ENCODE measurements at regions of chr6 and their contacts with region 1.

Region 1: DNA sequence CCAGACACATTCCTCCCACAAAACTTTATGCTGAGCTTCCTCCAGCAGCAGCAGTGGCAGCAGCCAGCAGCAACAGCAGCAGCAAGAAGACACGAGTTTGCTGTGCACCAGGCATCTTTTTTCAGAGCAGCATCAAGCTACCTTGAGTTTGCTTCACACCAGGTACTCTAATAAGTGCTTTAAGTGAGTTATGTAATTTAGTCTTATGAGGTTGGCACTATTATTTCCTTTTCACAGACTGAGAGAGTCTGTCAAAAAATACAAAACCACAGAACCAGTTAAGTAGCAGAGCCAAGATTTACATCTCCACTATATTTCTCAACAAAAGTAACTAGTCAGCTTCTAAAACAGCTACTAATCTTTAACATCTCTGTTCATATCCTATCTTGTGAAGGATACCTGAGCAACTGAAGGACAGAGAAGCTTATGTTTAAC is 23.7 kb downstream of the RANBP9 start:
- DNase-seq: peak in 7 of 9 donors; percentile 37 to 76 (median 64)
- ATAC-seq: peak; percentile 87
- H3K4me3 ChIP-seq: peak overlapping the region; percentile 13
- H3K4me3 Mint-ChIP-seq: peak overlapping the region; percentile 33 to 83 (median 70)
- H3K27ac ChIP-seq: peak overlapping the region; percentile 66
- H3K27ac Mint-ChIP-seq: peak overlapping the region; percentile 53 to 97 (median 94)
- H3K4me1 ChIP-seq: peaks cover 43 to 54% of the 10 kb centered on the region in 2 donors
- H3K4me1 Mint-ChIP-seq: peaks cover 40 to 73% (median 65%) of the 10 kb centered on the region in 7 donors
- H3K27me3 ChIP-seq: no peaks in the 10 kb centered on the region
- H3K27me3 Mint-ChIP-seq: no peaks in the 10 kb centered on the region

Region 2: DNA sequence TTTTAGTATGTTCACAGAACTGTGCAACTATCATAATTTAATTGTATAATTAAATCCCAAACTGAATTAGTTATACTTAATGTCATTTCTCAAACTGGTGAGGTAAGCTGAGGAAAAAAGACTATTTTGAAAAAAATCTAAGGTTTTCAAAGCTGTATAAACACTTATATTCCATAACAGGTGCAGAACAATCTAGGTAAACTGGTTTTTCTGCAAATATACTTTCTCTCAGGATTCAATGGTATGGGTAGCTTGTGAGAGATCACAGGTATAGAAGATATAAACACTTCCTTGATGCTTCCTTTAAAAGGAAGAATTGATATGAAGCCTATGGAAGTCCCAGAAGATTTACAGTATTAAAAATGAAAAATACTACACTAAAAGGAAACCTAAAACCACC is 39.1 kb before region 1 on chr6:
- CTCF ChIA-PET with region 1: no interaction called
- POLR2A ChIA-PET with region 1: no interaction called
- intact Hi-C with region 1: loop called in 1 of 2 experiments (anchors 5 kb)
- DNase-seq: no peak
- ATAC-seq: no peak
- H3K4me3 ChIP-seq: no peak overlapping the region
- H3K4me3 Mint-ChIP-seq: no peak overlapping the region
- H3K27ac ChIP-seq: no peak overlapping the region
- H3K27ac Mint-ChIP-seq: peak overlapping the region in 4 of 9 donors; percentile 9 to 53 (median 17)
- H3K4me1 ChIP-seq: peaks cover 0 to 4% of the 10 kb centered on the region in 2 donors
- H3K4me1 Mint-ChIP-seq: peaks cover 5 to 29% (median 19%) of the 10 kb centered on the region in 7 donors
- H3K27me3 ChIP-seq: no peaks in the 10 kb centered on the region
- H3K27me3 Mint-ChIP-seq: no peaks in the 10 kb centered on the region

Region 3: DNA sequence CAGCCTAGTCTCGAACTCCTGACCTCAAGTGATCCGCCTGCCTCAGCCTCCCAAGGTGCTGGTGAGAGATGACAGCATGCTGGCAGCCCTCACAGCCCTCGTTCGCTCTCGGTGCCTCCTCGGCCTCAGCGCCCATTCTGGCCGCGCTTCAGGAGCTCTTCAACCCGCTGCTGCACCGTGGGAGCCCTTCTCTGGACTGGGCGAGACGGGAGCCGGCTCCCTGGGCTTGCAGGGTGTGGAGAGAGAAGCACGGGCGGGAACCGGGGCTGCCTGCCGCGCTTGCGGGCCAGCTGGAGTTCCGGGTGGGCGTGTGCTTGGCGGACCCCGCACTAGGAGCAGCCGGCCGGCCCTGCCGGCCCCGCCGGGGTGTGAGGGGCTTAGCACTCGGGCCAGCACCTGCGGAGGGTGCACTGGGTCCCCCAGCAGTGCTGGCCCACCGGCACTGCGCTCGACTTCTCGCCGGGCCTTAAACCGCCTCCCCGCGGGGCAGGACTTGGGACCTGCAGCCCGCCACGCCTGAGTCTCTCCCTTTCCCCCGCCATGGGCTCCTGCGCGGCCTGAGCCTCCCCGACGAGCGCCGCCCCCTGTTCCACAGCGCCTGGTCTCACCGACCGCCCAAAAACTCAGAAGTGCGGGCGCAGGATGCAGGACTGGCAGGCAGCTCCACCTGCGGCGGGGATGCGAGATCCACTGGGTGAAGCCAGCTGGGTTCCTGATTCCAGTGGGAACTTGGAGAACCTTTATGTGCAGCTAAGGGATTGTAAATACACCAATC is 55.2 kb after region 1 on chr6:
- CTCF ChIA-PET with region 1: no interaction called
- POLR2A ChIA-PET with region 1: no interaction called
- intact Hi-C with region 1: no loop called
- DNase-seq: no peak
- ATAC-seq: no peak
- H3K4me3 ChIP-seq: no peak overlapping the region
- H3K4me3 Mint-ChIP-seq: peak overlapping the region in 4 of 10 donors; percentile 30 to 60 (median 60)
- H3K27ac ChIP-seq: no peak overlapping the region
- H3K27ac Mint-ChIP-seq: no peak overlapping the region
- H3K4me1 ChIP-seq: peaks cover 0 to 4% of the 10 kb centered on the region in 2 donors
- H3K4me1 Mint-ChIP-seq: peaks cover 0 to 2% (median 0%) of the 10 kb centered on the region in 7 donors
- H3K27me3 ChIP-seq: no peaks in the 10 kb centered on the region
- H3K27me3 Mint-ChIP-seq: no peaks in the 10 kb centered on the region